Activated CD4-positive, alpha-beta T cell treated with anti-CD3 and anti-CD28 coated beads, Interleukin-2, amount 10 ng/mL, durations not matched to agents 7 days and 5 days (primary cell): ENCODE measurements at regions of chr1 and their contacts with region 1.

Region 1: DNA sequence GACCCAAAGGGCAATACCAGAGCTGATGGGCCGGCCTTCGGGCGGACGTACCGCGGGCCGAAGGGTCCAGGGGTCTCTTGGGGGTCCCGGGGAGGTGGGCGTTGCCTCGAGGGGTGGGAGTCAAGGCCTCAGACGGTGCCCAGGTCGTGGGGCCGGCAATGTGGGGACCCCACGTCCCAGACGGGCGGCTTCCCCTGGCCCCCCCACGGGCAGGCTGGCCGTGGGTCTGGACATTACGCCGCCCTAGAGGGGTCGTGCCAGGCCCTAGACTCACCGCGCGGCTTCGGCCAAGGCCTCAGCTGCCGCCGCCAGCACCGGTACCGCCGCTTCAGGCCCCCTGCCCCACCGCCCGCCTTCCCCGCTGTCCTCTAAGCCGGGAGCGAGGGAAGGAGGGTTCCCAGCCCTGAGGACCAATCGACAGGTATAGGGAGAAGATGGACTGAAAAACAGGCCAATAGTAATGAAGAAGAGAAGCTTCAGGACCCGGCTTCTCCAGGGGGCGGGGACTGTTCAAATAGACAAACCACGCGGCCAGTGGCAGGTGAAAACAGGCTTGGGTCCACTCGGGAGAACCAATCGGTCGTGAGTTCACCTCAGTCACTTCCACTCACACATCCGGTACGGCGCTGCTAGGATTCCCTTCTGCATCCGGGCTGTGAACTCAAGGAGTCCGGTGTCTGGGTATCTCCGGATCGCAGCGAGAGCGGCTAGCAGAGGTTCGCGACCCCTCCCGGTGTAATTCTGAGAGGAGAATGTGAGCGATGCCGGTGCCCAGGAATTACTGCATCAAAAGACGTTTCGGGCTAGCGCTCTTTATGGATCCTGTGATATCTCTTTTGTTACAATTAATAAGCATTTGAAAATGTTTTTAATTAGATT is at the start of gene MTOR:
- DNase-seq: peak; percentile 99
- H3K4me3 Mint-ChIP-seq: peak within 1 kb of the TSS; percentile 92
- H3K27ac Mint-ChIP-seq: peak within 1 kb of the TSS; percentile 89
- H3K4me1 Mint-ChIP-seq: peaks cover 14% of the 10 kb centered on the region
- H3K27me3 Mint-ChIP-seq: no peaks in the 10 kb centered on the region
- total RNA-seq, gene MTOR: 49.2 to 57.2 TPM

Region 2: GRCh38 chr1:11245904-11246719 is 16.3 kb before region 1 on chr1:
- CTCF ChIA-PET with region 1: interaction called, 10 read pairs
- POLR2A ChIA-PET with region 1: no interaction called
- DNase-seq: no peak
- H3K4me3 Mint-ChIP-seq: no peak overlapping the region
- H3K27ac Mint-ChIP-seq: peak overlapping the region; percentile 43
- H3K4me1 Mint-ChIP-seq: peaks cover 10% of the 10 kb centered on the region
- H3K27me3 Mint-ChIP-seq: no peaks in the 10 kb centered on the region

Region 3: GRCh38 chr1:11279152-11279551 is 16.7 kb after region 1 on chr1:
- CTCF ChIA-PET with region 1: interaction called, 10 read pairs
- POLR2A ChIA-PET with region 1: no interaction called
- DNase-seq: no peak
- H3K4me3 Mint-ChIP-seq: no peak overlapping the region
- H3K27ac Mint-ChIP-seq: peak overlapping the region; percentile 89
- H3K4me1 Mint-ChIP-seq: peaks cover 79% of the 10 kb centered on the region
- H3K27me3 Mint-ChIP-seq: no peaks in the 10 kb centered on the region

Region 4: GRCh38 chr1:11429226-11429625 is 166.8 kb after region 1 on chr1:
- CTCF ChIA-PET with region 1: no interaction called
- POLR2A ChIA-PET with region 1: no interaction called
- DNase-seq: no peak
- H3K4me3 Mint-ChIP-seq: no peak overlapping the region
- H3K27ac Mint-ChIP-seq: no peak overlapping the region
- H3K4me1 Mint-ChIP-seq: peaks cover 2% of the 10 kb centered on the region
- H3K27me3 Mint-ChIP-seq: peaks cover 4% of the 10 kb centered on the region